Colonic mucosa (tissue), 4 donors: ENCODE measurements at regions of chr2 and their contacts with region 1.

Region 1: GRCh38 chr2:98649135-98649991 is 41.0 kb downstream of the UNC50 start:
- DNase-seq: peak; percentile 89
- H3K4me3 ChIP-seq: no peak overlapping the region
- H3K27ac ChIP-seq: no peak overlapping the region
- H3K4me1 ChIP-seq: no peaks in the 10 kb centered on the region
- H3K27me3 ChIP-seq: no peaks in the 10 kb centered on the region
- CTCF ChIP-seq: peak; percentile 98

Region 2: GRCh38 chr2:98685930-98686887 is 36.8 kb after region 1 on chr2:
- intact Hi-C with region 1: no loop called
- DNase-seq: no peak
- H3K4me3 ChIP-seq: no peak overlapping the region
- H3K27ac ChIP-seq: no peak overlapping the region
- H3K4me1 ChIP-seq: no peaks in the 10 kb centered on the region
- H3K27me3 ChIP-seq: no peaks in the 10 kb centered on the region
- CTCF ChIP-seq: no peak

Region 3: GRCh38 chr2:98835831-98836385 is 186.5 kb after region 1 on chr2:
- intact Hi-C with region 1: loop called (anchors 2 kb)
- DNase-seq: no peak
- H3K4me3 ChIP-seq: no peak overlapping the region
- H3K27ac ChIP-seq: no peak overlapping the region
- H3K4me1 ChIP-seq: no peaks in the 10 kb centered on the region
- H3K27me3 ChIP-seq: no peaks in the 10 kb centered on the region
- CTCF ChIP-seq: no peak

Region 4: GRCh38 chr2:98936353-98937351 is 287.3 kb after region 1 on chr2:
- intact Hi-C with region 1: no loop called
- DNase-seq: no peak
- H3K4me3 ChIP-seq: peak overlapping the region; percentile 34
- H3K27ac ChIP-seq: no peak overlapping the region
- H3K4me1 ChIP-seq: peaks cover 6% of the 10 kb centered on the region
- H3K27me3 ChIP-seq: peaks cover 29% of the 10 kb centered on the region
- CTCF ChIP-seq: no peak

Region 5: DNA sequence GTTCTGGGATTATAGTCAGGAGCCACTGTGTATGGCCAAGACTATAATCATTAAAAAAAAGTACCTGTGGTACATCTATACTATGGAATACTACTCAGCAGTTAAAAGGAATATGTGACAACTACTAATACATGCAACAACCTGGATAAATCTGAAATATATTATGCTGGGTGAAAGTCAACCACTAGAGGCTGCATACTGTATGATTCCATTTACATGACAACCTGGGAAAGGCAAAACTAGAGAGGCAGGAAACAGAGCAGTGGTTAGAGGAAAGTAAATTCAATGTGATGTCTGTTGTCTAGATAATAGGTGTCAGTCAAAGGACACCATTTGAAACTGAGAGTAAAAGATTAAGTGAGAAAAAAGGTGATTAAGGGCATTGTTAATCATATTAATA is 349.8 kb after region 1 on chr2:
- intact Hi-C with region 1: no loop called
- DNase-seq: no peak
- H3K4me3 ChIP-seq: no peak overlapping the region
- H3K27ac ChIP-seq: no peak overlapping the region
- H3K4me1 ChIP-seq: no peaks in the 10 kb centered on the region
- H3K27me3 ChIP-seq: no peaks in the 10 kb centered on the region
- CTCF ChIP-seq: no peak

Region 6: GRCh38 chr2:99066075-99066958 is 417.0 kb after region 1 on chr2:
- intact Hi-C with region 1: loop called (anchors 10 kb)
- DNase-seq: peak; percentile 35
- H3K4me3 ChIP-seq: no peak overlapping the region
- H3K27ac ChIP-seq: peak overlapping the region; percentile 83
- H3K4me1 ChIP-seq: no peaks in the 10 kb centered on the region
- H3K27me3 ChIP-seq: no peaks in the 10 kb centered on the region
- CTCF ChIP-seq: peak; percentile 31